Caco-2 (cell line): ENCODE measurements at regions of chr10 and their contacts with region 1.

Region 1: DNA sequence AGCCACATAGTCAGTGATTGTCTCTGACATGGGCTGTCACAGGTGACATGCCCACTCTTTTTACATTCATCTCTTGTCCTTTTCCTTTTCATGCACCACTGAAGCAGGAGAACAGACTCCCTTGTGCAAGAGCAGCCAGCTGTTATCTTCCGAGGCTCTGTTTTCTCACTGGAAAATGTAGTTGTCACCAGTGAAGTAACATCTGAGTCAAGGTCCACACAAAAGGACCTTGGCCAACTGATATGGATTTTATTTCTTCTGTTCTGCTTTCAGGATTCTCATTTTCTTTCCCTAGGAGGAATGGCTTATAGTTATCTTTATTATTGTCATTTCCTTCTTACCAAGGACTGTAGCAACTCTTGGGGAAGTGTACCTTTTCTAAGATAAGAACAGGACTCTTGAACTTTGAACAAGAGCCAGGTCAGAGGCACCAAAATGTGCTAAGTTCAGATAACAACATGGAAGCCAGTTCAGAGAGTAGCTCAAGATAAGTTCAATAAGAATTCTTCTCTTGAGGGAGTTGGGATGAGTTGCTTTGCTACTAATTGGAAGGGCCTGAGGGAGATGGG is 22.7 kb downstream of the AVPI1 start:
- DNase-seq: peak; percentile 67 to 76
- H3K4me3 ChIP-seq: no peak overlapping the region
- H3K4me3 Mint-ChIP-seq: peak overlapping the region; percentile 7
- H3K27ac Mint-ChIP-seq: peak overlapping the region; percentile 17
- H3K4me1 ChIP-seq: peaks cover 46% of the 10 kb centered on the region
- H3K4me1 Mint-ChIP-seq: peaks cover 20% of the 10 kb centered on the region
- H3K27me3 ChIP-seq: no peaks in the 10 kb centered on the region
- H3K27me3 Mint-ChIP-seq: no peaks in the 10 kb centered on the region
- CTCF ChIP-seq: no peak

Region 2: GRCh38 chr10:97640174-97640867 is 24.0 kb before region 1 on chr10 and contains the start of gene PI4K2A:
- CTCF ChIA-PET with region 1: interaction called, 4 read pairs
- POLR2A ChIA-PET with region 1: interaction called, 5 read pairs
- intact Hi-C with region 1: loop called (anchors 1 kb)
- DNase-seq: peak; percentile 99
- H3K4me3 ChIP-seq: peak within 1 kb of the TSS; percentile 82
- H3K4me3 Mint-ChIP-seq: peak within 1 kb of the TSS; percentile 99
- H3K27ac Mint-ChIP-seq: peak within 1 kb of the TSS; percentile 94
- H3K4me1 ChIP-seq: peaks cover 6% of the 10 kb centered on the region; the same call in 1 of the 2 replicates
- H3K4me1 Mint-ChIP-seq: peaks cover 12% of the 10 kb centered on the region
- H3K27me3 ChIP-seq: no peaks in the 10 kb centered on the region
- H3K27me3 Mint-ChIP-seq: no peaks in the 10 kb centered on the region
- CTCF ChIP-seq: no peak
- total RNA-seq, gene PI4K2A: 26.1 and 27.3 TPM in 2 replicates

Region 3: GRCh38 chr10:97648562-97649404 is 15.6 kb before region 1 on chr10:
- CTCF ChIA-PET with region 1: no interaction called
- POLR2A ChIA-PET with region 1: interaction called, 11 read pairs
- intact Hi-C with region 1: loop called (anchors 1 kb)
- DNase-seq: peak in 1 of 2 experiments; percentile 30
- H3K4me3 ChIP-seq: no peak overlapping the region
- H3K4me3 Mint-ChIP-seq: peak overlapping the region; percentile 2
- H3K27ac Mint-ChIP-seq: peak overlapping the region; percentile 72
- H3K4me1 ChIP-seq: peaks cover 13% of the 10 kb centered on the region
- H3K4me1 Mint-ChIP-seq: peaks cover 13% of the 10 kb centered on the region
- H3K27me3 ChIP-seq: no peaks in the 10 kb centered on the region
- H3K27me3 Mint-ChIP-seq: no peaks in the 10 kb centered on the region
- CTCF ChIP-seq: no peak

Region 4: GRCh38 chr10:97714048-97714371 is 49.6 kb after region 1 on chr10:
- CTCF ChIA-PET with region 1: interaction called, 3 read pairs
- POLR2A ChIA-PET with region 1: interaction called, 11 read pairs
- intact Hi-C with region 1: no loop called
- DNase-seq: peak; percentile 74 to 81
- H3K4me3 ChIP-seq: peak overlapping the region; percentile 89
- H3K4me3 Mint-ChIP-seq: peak overlapping the region; percentile 92
- H3K27ac Mint-ChIP-seq: peak overlapping the region; percentile 91
- H3K4me1 ChIP-seq: peaks cover 21% of the 10 kb centered on the region
- H3K4me1 Mint-ChIP-seq: peaks cover 19% of the 10 kb centered on the region
- H3K27me3 ChIP-seq: no peaks in the 10 kb centered on the region
- H3K27me3 Mint-ChIP-seq: no peaks in the 10 kb centered on the region
- CTCF ChIP-seq: peak in 1 of 2 experiments; percentile 49